ENCODE measurements at regions of chr9 and their contacts with region 1.

Region 1: DNA sequence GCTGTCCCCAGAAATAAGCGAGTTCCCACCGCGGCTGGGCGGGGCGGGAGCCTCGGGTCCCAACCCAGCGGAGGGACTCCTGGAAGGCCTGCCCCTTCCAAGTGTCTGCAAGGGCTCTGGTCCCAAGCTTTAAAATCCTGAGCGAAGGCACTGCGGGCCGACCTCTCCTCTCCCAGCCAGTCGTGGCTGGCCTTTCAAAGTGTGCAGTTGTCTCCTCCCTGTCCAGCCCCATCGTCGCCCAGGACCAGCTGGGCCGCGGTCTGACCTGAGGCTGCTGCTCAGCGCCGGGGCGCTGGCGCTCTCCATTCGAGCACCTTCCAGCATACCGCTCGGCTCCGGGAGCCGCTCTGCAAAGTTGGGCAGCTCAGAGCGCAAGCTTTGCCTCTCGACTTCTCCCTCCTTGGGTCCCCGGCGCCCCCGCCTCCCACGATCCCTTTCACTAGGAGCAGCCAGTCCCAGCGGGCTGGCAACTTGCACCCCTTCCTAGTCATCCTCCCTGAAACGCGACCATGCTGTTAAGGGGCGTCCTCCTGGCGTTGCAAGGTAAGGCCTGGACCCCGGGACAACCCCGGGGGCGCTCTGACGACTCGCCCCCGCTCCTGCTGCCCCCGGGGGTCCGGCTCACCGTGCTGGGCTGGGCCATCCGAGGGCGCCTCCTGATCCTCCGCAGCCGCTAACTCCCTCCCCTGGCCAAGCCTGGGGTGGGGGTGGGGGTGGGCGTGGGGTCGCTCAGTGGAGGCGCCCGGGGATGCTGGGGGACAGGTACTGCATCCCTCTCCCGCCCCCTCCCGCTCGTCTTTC is at the start of gene MAMDC2:
- DNase-seq: peak in 8 of 10 donors; percentile 40 to 71 (median 60)
- H3K4me3 ChIP-seq: peak within 1 kb of the TSS; percentile 38 to 78 (median 62)
- H3K27ac ChIP-seq: peak within 1 kb of the TSS in 43 of 59 donors; percentile 4 to 82 (median 54)
- H3K27me3 ChIP-seq: peaks cover 0 to 16% (median 0%) of the 10 kb centered on the region in 45 donors
- CTCF ChIP-seq: no peak
- total RNA-seq, gene MAMDC2: 0.74 to 9.6 (median 3.8) TPM

Region 2: DNA sequence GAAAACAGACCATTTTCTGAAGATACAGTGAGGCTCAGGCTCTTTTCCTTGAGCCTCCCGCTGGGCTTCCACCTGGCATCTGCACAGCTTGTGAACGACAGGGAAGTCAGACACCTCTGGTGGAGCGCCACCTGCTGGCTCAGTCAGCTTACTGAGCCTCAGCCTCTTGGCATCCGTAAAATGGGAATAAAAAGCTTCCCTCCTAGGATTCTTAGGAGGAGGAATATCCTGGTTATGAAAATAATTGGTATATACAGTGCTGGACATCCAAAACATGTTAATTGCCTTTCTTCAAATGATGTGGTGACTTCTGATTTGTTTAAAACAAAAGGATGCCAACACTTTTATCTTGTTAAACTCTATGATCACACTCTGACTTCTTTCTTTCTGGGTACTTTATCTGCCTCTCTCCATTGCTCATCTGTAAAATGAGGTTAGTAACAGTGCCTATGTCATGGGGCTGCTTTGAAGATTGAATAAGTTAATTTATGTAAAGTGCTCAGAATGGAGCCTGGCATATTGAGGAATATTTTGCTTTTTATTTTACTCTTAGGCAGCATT is 67.2 kb after region 1 on chr9:
- intact Hi-C with region 1: loop called in 1 of 2 experiments (anchors 10 kb)
- DNase-seq: peak; percentile 49 to 76 (median 68)
- H3K4me3 ChIP-seq: no peak overlapping the region
- H3K27ac ChIP-seq: no peak overlapping the region
- H3K27me3 ChIP-seq: no peaks in the 10 kb centered on the region
- CTCF ChIP-seq: peak; percentile 60 to 90 (median 79)